Natural killer cell (primary cell): ENCODE measurements at regions of chr6 and their contacts with region 1.

Region 1: GRCh38 chr6:47413752-47414422 is 63.7 kb upstream of the CD2AP start:
- DNase-seq: peak in 1 of 2 donors; percentile 81
- ATAC-seq: peak; percentile 83 to 87 (median 85)
- H3K4me3 ChIP-seq: peak overlapping the region; percentile 36
- H3K4me3 Mint-ChIP-seq: peak overlapping the region; percentile 83
- H3K27ac ChIP-seq: no peak overlapping the region
- H3K27ac Mint-ChIP-seq: peak overlapping the region in 1 of 2 donors; percentile 78
- H3K4me1 ChIP-seq: no peaks in the 10 kb centered on the region
- H3K4me1 Mint-ChIP-seq: peaks cover 18% of the 10 kb centered on the region in 2 donors
- H3K27me3 ChIP-seq: no peaks in the 10 kb centered on the region
- H3K27me3 Mint-ChIP-seq: no peaks in the 10 kb centered on the region
- CTCF ChIP-seq: peak; percentile 91

Region 2: DNA sequence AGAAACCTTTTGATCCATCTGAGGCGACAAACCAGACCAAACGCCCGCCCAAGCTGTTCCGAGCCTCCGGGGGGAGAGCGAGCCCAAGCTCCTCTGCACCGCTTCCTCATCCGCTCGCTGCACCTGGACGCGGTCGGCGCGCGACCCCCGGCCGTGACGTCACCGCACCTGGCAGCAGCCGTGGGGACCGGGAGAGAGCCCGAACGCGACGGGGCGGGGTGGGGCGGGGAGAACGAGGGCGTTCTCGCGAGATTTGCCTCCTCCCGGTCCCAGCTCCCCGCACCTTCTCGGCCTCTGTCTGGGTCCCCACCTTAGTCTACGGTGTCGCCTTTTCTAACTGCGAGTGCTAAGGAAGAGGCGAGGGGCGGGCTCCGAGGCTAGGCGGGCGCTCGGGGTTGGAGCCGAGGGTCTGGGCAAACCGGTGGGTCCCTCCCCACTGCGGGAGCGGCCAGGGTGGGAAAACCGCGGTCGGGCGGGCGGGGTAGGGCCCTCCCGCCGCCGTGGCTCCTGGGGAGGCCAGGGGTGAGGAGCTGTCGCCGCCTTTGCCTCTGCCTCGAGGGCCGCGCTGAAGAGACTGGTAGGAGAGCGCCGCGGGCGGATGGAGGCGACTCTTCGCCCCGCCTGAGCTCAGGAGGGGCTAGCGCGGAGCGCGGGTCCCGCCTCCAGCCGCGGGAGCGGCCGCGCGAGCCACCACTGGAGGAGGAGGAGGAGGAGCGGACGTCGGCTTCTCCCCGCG is 63.8 kb after region 1 on chr6 and contains the start of gene CD2AP:
- intact Hi-C with region 1: loop called (anchors 5 kb)
- DNase-seq: peak; percentile 76 to 96
- ATAC-seq: peak; percentile 80 to 90 (median 83)
- H3K4me3 ChIP-seq: peak within 1 kb of the TSS; percentile 60
- H3K4me3 Mint-ChIP-seq: peak within 1 kb of the TSS; percentile 100
- H3K27ac ChIP-seq: peak within 1 kb of the TSS; percentile 93
- H3K27ac Mint-ChIP-seq: peak within 1 kb of the TSS; percentile 95
- H3K4me1 ChIP-seq: peaks cover 10% of the 10 kb centered on the region
- H3K4me1 Mint-ChIP-seq: peaks cover 24 to 34% of the 10 kb centered on the region in 2 donors
- H3K27me3 ChIP-seq: no peaks in the 10 kb centered on the region
- H3K27me3 Mint-ChIP-seq: no peaks in the 10 kb centered on the region
- CTCF ChIP-seq: no peak
- total RNA-seq, gene CD2AP: 23.8 to 26.3 (median 26.3) TPM

Region 3: GRCh38 chr6:47631269-47631772 is 217.4 kb after region 1 on chr6:
- intact Hi-C with region 1: loop called (anchors 1 kb)
- DNase-seq: peak in 1 of 2 donors; percentile 59
- ATAC-seq: peak in 2 of 3 donors; percentile 5 to 57
- H3K4me3 ChIP-seq: no peak overlapping the region
- H3K4me3 Mint-ChIP-seq: no peak overlapping the region
- H3K27ac ChIP-seq: no peak overlapping the region
- H3K27ac Mint-ChIP-seq: peak overlapping the region; percentile 14 to 60
- H3K4me1 ChIP-seq: peaks cover 12% of the 10 kb centered on the region
- H3K4me1 Mint-ChIP-seq: peaks cover 13 to 14% of the 10 kb centered on the region in 2 donors
- H3K27me3 ChIP-seq: no peaks in the 10 kb centered on the region
- H3K27me3 Mint-ChIP-seq: no peaks in the 10 kb centered on the region
- CTCF ChIP-seq: peak; percentile 67

Region 4: DNA sequence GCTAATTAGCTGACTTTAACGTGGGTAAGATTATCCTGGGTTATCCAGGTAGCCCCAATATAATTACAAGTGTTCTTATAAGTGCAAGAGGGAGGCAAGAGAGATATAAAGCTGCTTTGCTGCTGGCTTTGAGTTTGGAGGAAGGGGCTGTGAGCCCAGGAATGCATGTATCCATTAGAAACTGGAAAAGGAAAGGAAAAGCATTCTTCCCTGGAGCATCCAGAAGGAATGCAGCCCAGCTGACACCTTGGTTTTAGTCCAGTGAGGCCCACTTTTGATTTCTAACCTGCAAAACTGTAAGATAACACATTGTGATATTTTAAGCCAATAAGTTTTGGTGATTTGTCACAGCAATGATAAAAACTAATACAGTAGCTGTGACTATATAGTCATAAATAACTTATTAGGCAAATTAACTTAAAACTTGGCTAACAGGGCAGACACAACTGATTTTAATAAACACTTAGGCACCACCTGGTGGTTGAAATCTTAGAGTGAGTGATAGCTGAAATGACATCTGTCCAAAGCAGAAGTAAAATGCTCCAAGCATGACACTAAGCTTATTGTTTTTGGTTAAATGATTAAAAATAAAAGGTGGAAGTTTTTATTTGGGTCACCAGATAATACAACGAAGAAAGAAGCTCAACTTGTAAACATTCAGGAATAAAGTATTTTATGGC is 320.1 kb after region 1 on chr6:
- intact Hi-C with region 1: loop called (anchors 1 kb)
- DNase-seq: peak in 1 of 2 donors; percentile 40
- ATAC-seq: no peak
- H3K4me3 ChIP-seq: no peak overlapping the region
- H3K4me3 Mint-ChIP-seq: no peak overlapping the region
- H3K27ac ChIP-seq: no peak overlapping the region
- H3K27ac Mint-ChIP-seq: no peak overlapping the region
- H3K4me1 ChIP-seq: no peaks in the 10 kb centered on the region
- H3K4me1 Mint-ChIP-seq: no peaks in the 10 kb centered on the region
- H3K27me3 ChIP-seq: no peaks in the 10 kb centered on the region
- H3K27me3 Mint-ChIP-seq: peaks cover 0 to 3% of the 10 kb centered on the region in 2 donors
- CTCF ChIP-seq: no peak

Region 5: DNA sequence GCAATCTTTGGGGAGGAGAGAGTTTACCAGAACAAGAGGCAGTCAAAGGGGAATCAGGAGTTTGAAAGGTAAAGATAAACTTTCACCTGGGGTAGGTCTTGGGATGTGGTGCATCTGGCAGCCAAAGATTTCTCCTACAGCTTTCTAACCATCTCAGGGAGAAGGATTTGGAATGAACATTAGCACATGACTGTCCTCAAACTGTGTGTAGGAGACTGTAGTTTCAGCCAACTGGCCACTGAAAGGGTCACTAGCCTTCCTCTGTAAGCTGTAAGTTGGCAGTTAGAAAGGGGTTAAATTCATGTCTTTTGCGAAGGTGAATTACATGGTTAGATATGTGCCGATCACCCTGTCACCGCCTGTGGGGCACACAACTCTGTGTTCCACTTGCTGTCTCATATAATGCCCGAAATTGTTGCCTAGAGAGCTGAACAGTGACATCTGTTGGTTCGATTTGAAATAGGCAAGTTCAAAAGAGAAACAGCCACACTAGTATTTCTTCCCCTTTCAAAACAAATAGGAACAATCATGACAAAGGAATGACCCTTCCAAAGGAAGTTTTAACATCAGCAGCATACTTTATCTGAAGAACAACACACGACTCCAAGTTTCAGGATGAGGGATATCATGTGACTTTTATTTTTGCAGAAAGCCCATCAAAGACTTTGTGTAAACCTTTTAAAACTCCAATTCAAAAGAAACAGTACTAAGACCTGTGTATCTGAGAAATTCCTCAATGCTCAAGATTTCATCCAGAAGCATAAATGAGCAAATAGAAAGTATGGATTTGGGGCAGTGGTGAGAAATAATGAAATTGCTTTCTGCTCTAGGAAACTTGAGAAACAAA is 366.8 kb after region 1 on chr6:
- intact Hi-C with region 1: loop called (anchors 1 kb)
- DNase-seq: peak in 1 of 2 donors; percentile 65
- ATAC-seq: peak; percentile 60 to 76 (median 62)
- H3K4me3 ChIP-seq: no peak overlapping the region
- H3K4me3 Mint-ChIP-seq: no peak overlapping the region
- H3K27ac ChIP-seq: no peak overlapping the region
- H3K27ac Mint-ChIP-seq: no peak overlapping the region
- H3K4me1 ChIP-seq: no peaks in the 10 kb centered on the region
- H3K4me1 Mint-ChIP-seq: peaks cover 0 to 6% of the 10 kb centered on the region in 2 donors
- H3K27me3 ChIP-seq: no peaks in the 10 kb centered on the region
- H3K27me3 Mint-ChIP-seq: peaks cover 7 to 9% of the 10 kb centered on the region in 2 donors
- CTCF ChIP-seq: peak; percentile 34